ENCODE measurements at regions of chr20 and their contacts with region 1.

Region 1: GRCh38 chr20:43472671-43473380 is 15.1 kb downstream of the SRSF6 start:
- DNase-seq: no peak
- H3K4me3 ChIP-seq: no peak overlapping the region
- H3K27ac ChIP-seq: no peak overlapping the region
- H3K27me3 ChIP-seq: no peaks in the 10 kb centered on the region
- CTCF ChIP-seq: no peak

Region 2: DNA sequence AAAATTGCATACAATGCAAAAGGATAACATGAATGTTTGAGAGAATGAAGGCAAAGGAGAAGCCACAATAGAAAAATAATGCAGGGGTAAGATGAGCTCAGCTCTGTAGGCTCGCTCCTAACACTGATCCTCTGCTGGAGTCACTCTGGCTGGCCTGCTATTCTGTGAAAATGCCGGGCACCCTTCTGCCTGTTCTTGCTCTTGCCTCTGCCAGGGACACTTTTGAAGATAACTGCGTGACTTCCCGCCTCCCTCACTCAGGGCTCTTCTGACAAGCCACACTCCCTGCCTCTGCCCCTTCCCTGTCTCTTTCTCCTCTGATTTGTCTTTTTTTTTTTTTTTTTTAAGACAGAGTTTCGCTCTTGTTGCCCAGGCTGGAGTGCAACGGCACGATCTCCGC is 158.8 kb after region 1 on chr20:
- CTCF ChIA-PET with region 1: no interaction called
- POLR2A ChIA-PET with region 1: interaction called, 11 read pairs
- DNase-seq: no peak
- H3K4me3 ChIP-seq: no peak overlapping the region
- H3K27ac ChIP-seq: no peak overlapping the region
- H3K27me3 ChIP-seq: no peaks in the 10 kb centered on the region
- CTCF ChIP-seq: no peak

Measured in AG04450 (cell line).